ENCODE measurements at regions of chr11 and their contacts with region 1.

Region 1: DNA sequence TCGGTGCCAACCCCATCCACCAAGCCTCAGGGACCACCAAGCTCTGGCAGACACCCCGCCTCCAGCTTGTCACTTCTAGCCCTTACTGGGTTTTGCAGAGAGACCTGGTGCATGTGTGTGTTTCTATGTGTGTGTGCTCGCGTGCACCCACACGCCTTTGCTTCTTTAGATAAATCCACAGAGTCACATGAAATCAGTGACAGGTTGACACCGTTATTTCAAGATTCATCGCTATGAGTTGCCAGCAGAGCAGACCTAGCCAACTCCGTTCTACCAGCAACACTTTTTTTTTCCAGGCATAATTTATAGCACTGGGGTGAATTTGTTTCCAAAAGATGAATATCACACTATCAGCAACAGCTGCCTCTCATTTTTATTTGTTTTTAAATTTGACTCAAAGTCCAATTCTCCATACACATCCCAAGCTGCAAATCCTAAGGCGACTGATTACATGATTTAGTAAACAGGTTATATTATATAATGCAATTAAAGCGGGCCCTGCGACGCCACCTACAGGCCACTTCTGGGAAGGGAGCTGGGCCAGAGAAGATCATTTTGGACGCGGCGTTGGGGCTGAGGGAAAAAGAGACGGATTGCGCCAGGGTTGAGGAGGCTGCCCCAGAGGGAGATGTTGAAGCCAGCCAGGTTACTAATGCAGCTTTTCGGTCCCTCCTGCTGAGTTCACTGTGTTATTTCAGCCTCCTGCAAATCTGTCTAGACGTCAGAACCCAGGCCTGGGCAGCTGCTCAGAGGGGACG is 150.5 kb downstream of the FEZ1 start:
- DNase-seq: no peak
- ATAC-seq: peak; percentile 79
- H3K4me3 ChIP-seq: no peak overlapping the region
- H3K27ac ChIP-seq: no peak overlapping the region
- H3K4me1 ChIP-seq: no peaks in the 10 kb centered on the region
- H3K27me3 ChIP-seq: peaks cover 5% of the 10 kb centered on the region; the same call in 1 of the 2 replicates
- CTCF ChIP-seq: peak; percentile 98

Region 2: DNA sequence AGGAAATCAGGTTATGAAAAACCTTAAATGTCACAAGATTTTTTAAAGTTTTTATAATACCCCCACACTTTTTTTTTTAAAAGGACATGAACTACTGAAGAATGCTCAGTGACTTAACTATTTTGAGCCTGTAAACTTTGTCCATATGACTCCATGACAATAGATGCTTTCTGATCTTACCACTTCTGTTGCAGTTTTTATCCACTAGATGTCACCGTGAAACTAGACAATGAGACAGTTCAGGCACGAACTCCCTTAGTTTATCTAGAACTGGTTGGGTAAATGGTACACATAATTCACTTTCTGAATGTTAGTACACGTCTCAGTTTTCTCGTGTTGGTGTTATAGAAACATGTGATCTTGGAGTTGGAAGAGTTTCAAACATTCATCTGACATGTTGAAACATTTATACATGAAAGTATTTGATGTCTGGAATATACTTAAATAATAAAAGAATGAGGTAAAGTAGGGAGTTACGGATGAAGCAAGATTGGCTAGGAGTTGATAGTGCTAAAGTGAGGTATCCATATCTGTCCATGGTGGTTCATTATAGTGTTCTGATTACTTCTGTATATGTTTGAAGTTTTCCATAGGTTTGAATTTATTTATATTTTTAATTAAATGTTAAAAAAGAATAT is 383.5 kb before region 1 on chr11:
- CTCF ChIA-PET with region 1: no interaction called
- POLR2A ChIA-PET with region 1: no interaction called
- in situ Hi-C with region 1: no loop called
- intact Hi-C with region 1: loop called (anchors 5 kb)
- DNase-seq: peak; percentile 78
- ATAC-seq: peak; percentile 99
- H3K4me3 ChIP-seq: no peak overlapping the region
- H3K27ac ChIP-seq: no peak overlapping the region
- H3K4me1 ChIP-seq: no peaks in the 10 kb centered on the region
- H3K27me3 ChIP-seq: no peaks in the 10 kb centered on the region
- CTCF ChIP-seq: peak; percentile 77; the same call in 1 of the 2 replicates

Region 3: GRCh38 chr11:125091247-125091876 is 254.2 kb before region 1 on chr11:
- CTCF ChIA-PET with region 1: interaction called, 9 read pairs
- POLR2A ChIA-PET with region 1: interaction called, 3 read pairs
- in situ Hi-C with region 1: no loop called
- intact Hi-C with region 1: loop called (anchors 1 kb)
- DNase-seq: peak; percentile 36
- ATAC-seq: peak; percentile 91
- H3K4me3 ChIP-seq: no peak overlapping the region
- H3K27ac ChIP-seq: no peak overlapping the region
- H3K4me1 ChIP-seq: no peaks in the 10 kb centered on the region
- H3K27me3 ChIP-seq: no peaks in the 10 kb centered on the region
- CTCF ChIP-seq: peak; percentile 85

Region 4: GRCh38 chr11:125164422-125165110 is 181.0 kb before region 1 on chr11 and contains the start of gene PKNOX2:
- CTCF ChIA-PET with region 1: interaction called, 12 read pairs
- POLR2A ChIA-PET with region 1: no interaction called
- in situ Hi-C with region 1: no loop called
- intact Hi-C with region 1: loop called (anchors 2 kb)
- DNase-seq: no peak
- ATAC-seq: peak; percentile 92
- H3K4me3 ChIP-seq: peak within 1 kb of the TSS; percentile 44 to 51
- H3K27ac ChIP-seq: no peak within 1 kb of the TSS
- H3K4me1 ChIP-seq: no peaks in the 10 kb centered on the region
- H3K27me3 ChIP-seq: peaks cover 10% of the 10 kb centered on the region
- CTCF ChIP-seq: peak; percentile 92
- total RNA-seq, gene PKNOX2: not detected

Region 5: GRCh38 chr11:125320347-125321076 is 25.1 kb before region 1 on chr11:
- CTCF ChIA-PET with region 1: interaction called, 10 read pairs
- POLR2A ChIA-PET with region 1: no interaction called
- in situ Hi-C with region 1: no loop called
- intact Hi-C with region 1: no loop called
- DNase-seq: no peak
- ATAC-seq: no peak
- H3K4me3 ChIP-seq: no peak overlapping the region
- H3K27ac ChIP-seq: no peak overlapping the region
- H3K4me1 ChIP-seq: no peaks in the 10 kb centered on the region
- H3K27me3 ChIP-seq: peaks cover 16% of the 10 kb centered on the region
- CTCF ChIP-seq: no peak

Region 6: GRCh38 chr11:125404776-125405435 is 59.3 kb after region 1 on chr11:
- CTCF ChIA-PET with region 1: interaction called, 3 read pairs
- POLR2A ChIA-PET with region 1: no interaction called
- in situ Hi-C with region 1: no loop called
- intact Hi-C with region 1: loop called (anchors 5 kb)
- DNase-seq: peak; percentile 46
- ATAC-seq: peak; percentile 92
- H3K4me3 ChIP-seq: no peak overlapping the region
- H3K27ac ChIP-seq: no peak overlapping the region
- H3K4me1 ChIP-seq: 0 out of 2 replicates have a peak, but pooled peaks cover 5% of the 10 kb centered on the region
- H3K27me3 ChIP-seq: peaks cover 58% of the 10 kb centered on the region
- CTCF ChIP-seq: peak; percentile 100